GM13976 (cell line): ENCODE measurements at regions of chr16 and their contacts with region 1.

Region 1: DNA sequence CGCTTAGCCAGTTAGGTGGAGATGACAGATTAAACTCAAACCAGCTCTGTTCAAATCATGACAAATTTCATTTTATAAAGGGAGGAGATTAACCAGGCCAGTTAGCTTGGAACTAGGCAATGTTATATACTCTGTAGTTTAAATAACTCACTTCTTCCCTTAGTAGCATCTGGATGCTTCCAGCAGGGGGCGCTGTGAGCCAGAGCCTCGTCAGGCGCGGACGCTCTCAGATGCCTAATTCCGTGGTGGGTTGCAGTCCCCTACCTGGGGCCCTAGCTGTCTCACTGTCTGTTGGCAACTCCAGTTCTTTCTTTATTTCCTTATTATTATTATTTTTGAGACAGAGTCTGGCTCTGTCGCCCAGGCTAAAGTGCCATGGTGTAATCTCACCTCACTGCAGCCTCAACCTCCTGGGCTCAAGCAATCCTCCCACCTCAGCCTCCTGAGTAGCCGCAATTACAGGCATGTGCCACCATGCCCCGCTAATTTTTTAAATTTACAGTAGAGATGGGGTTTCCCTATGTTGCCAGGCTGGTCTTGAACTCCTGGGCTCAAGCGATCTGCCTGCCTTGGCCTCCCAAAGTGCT is 17.3 kb upstream of the WFDC1 start:
- DNase-seq: peak; percentile 80
- CTCF ChIP-seq: peak; percentile 81

Region 2: GRCh38 chr16:84166796-84167695 is 110.3 kb before region 1 on chr16:
- in situ Hi-C with region 1: no loop called
- DNase-seq: no peak
- CTCF ChIP-seq: no peak

Region 3: DNA sequence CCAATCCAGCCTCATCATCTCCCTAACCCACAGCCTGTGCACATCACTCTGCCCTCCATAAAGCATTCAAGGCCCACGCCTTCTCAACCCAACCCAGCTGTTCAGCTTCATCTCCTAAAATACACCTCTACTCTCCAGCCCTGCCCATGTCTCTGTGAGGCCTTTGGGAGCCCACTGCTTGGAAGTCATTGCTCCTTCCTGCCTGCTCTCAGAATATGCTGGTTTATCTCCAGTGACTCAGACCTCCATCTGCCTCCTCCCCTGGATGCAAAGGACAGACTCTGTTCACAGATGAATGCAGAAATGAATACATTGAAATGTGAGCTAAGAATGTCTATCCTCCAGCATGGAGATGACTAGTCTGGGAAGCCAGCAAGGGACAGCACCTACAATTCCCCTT is 56.5 kb before region 1 on chr16:
- in situ Hi-C with region 1: no loop called
- DNase-seq: no peak
- CTCF ChIP-seq: no peak

Region 4: GRCh38 chr16:84484579-84485254 is 207.4 kb after region 1 on chr16:
- in situ Hi-C with region 1: loop called (anchors 25 kb)
- DNase-seq: no peak
- CTCF ChIP-seq: no peak

Region 5: GRCh38 chr16:84617791-84618580 is 340.7 kb after region 1 on chr16 and contains the start of gene COTL1:
- in situ Hi-C with region 1: loop called (anchors 25 kb)
- DNase-seq: peak; percentile 97
- CTCF ChIP-seq: peak; percentile 8